ENCODE measurements at regions of chr15 and their contacts with region 1.

Region 1: DNA sequence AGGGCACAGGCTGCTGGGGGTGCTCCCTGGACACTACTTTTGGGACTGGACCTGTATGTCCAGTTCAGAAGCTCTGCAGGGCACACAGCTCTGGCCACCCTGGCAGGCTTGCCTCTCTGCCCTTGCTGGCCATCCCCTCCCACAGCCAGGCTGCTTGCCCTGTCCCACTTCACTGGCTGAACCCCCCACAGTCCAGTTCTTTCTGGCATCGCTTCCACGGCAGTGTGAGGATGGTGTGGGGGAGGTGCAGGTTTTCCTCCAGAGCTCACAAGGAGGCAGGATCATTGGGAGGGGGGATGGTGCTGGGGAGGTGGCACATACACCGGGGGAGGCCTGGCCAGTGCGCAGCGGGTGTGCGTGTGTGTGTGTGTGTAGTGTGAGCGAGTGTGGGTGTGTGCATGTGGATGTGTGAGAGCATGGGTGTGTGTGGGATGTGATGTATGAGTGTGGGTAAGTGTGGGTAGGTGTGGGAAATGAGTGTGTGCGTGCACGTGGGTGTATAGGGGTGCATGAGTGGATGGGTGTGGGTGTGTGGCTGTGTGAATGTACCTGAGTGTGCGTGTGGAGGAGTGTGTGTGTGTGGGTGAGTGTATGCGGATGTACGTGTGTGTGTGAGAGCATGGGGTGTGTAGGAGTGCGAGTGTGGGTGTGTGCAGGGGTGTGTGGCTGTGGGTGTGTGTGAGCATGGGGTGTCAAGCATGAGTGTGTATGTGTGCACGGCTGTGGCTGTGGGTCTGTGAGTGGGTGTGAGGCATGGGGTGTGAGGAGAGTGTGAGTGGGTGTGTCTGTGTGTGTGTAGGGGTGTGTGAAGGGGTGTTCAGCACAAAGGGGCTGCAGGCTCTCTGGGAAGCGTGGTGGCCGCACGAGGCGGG is 155.2 kb downstream of the NSMCE3 start:
- DNase-seq: no peak
- H3K4me3 ChIP-seq: no peak overlapping the region
- H3K27ac ChIP-seq: no peak overlapping the region
- H3K4me1 ChIP-seq: no peaks in the 10 kb centered on the region
- H3K27me3 ChIP-seq: no peaks in the 10 kb centered on the region
- CTCF ChIP-seq: no peak

Region 2: DNA sequence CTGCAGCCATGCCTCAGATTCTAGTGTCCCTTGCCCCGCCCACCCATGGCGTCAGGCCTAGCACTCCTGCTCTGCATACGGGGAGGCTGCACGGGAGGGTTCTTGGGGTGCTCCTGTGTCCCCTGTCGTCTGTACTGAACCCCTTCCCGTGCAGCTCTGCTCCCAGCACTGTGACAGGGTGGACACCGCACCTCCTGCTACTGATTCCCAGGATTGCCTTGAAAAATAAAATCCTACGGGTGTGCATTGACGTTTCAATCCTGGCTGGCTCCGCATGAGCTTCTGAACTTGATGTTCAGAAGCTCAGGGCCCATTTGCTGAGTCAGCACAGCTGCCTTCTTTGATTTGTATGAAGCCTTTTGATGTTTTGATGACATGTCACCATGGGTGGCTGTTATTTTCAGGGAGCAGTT is 52.3 kb before region 1 on chr15:
- intact Hi-C with region 1: loop called (anchors 5 kb)
- DNase-seq: no peak
- H3K4me3 ChIP-seq: no peak overlapping the region
- H3K27ac ChIP-seq: no peak overlapping the region
- H3K4me1 ChIP-seq: no peaks in the 10 kb centered on the region
- H3K27me3 ChIP-seq: no peaks in the 10 kb centered on the region
- CTCF ChIP-seq: no peak